AG04450 (cell line): ENCODE measurements at regions of chr7 and their contacts with region 1.

Region 1: GRCh38 chr7:139823959-139824521 is 5.0 kb upstream of the TBXAS1 start:
- DNase-seq: peak; percentile 68
- H3K4me3 ChIP-seq: peak overlapping the region; percentile 7; the same call in 1 of the 2 replicates
- H3K27ac ChIP-seq: peak overlapping the region; percentile 60
- H3K27me3 ChIP-seq: peaks cover 3% of the 10 kb centered on the region
- CTCF ChIP-seq: no peak

Region 2: GRCh38 chr7:139541600-139542307 is 282.3 kb before region 1 on chr7:
- CTCF ChIA-PET with region 1: no interaction called
- POLR2A ChIA-PET with region 1: no interaction called
- DNase-seq: no peak
- H3K4me3 ChIP-seq: no peak overlapping the region
- H3K27ac ChIP-seq: no peak overlapping the region
- H3K27me3 ChIP-seq: peaks cover 16% of the 10 kb centered on the region
- CTCF ChIP-seq: no peak

Region 3: GRCh38 chr7:139714163-139714901 is 109.7 kb before region 1 on chr7:
- CTCF ChIA-PET with region 1: no interaction called
- POLR2A ChIA-PET with region 1: no interaction called
- DNase-seq: no peak
- H3K4me3 ChIP-seq: no peak overlapping the region
- H3K27ac ChIP-seq: no peak overlapping the region
- H3K27me3 ChIP-seq: no peaks in the 10 kb centered on the region
- CTCF ChIP-seq: no peak

Region 4: GRCh38 chr7:139811066-139811465 is 13.0 kb before region 1 on chr7:
- CTCF ChIA-PET with region 1: interaction called, 3 read pairs
- POLR2A ChIA-PET with region 1: interaction called, 10 read pairs
- DNase-seq: no peak
- H3K4me3 ChIP-seq: no peak overlapping the region
- H3K27ac ChIP-seq: no peak overlapping the region
- H3K27me3 ChIP-seq: peaks cover 2% of the 10 kb centered on the region
- CTCF ChIP-seq: no peak